Gastrocnemius medialis (tissue), 4 donors: ENCODE measurements at regions of chr19 and their contacts with region 1.

Region 1: DNA sequence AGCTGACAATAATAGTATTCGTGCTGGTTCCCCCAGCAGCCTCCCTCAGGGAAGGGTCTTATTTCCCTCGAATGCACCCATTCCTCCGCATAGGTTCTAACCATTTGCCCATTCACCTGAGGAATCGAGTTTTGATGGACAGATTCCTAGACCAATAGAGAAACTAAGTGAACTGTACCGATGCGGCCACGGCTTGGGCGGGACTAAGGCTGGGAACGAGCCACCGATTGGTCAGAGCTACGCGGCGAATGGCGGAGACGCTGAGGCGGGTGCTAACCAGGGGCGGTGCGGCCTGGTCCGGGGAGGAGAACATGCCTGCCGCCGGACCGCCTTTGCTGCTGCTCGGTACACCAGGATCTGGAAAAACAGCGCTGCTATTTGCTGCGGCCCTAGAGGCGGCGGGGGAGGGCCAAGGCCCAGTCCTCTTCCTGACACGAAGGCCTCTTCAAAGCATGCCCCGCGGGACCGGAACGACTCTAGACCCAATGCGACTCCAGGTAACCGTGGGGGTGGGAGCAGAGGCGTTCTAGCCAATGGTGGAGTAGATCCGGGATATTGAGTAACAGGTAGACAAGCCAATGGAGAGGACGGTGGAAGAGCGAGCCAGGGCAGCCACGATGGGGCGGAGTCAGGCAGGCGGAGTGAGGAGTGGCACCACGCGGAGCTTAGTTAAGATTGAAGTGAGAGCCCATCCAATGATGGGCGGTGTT is at the start of gene SWSAP1:
- DNase-seq: peak; percentile 99
- ATAC-seq: peak; percentile 97 to 98
- H3K4me3 ChIP-seq: peak within 1 kb of the TSS; percentile 73 to 84 (median 76)
- H3K27ac ChIP-seq: peak within 1 kb of the TSS; percentile 93 to 97 (median 94)
- H3K4me1 ChIP-seq: peaks cover 22 to 24% of the 10 kb centered on the region in 2 donors
- H3K27me3 ChIP-seq: no peaks in the 10 kb centered on the region
- CTCF ChIP-seq: no peak
- POLR2A ChIP-seq: peak in 1 of 2 donors; percentile 47
- total RNA-seq, gene SWSAP1: 0.51 to 1.7 (median 1.2) TPM

Region 2: DNA sequence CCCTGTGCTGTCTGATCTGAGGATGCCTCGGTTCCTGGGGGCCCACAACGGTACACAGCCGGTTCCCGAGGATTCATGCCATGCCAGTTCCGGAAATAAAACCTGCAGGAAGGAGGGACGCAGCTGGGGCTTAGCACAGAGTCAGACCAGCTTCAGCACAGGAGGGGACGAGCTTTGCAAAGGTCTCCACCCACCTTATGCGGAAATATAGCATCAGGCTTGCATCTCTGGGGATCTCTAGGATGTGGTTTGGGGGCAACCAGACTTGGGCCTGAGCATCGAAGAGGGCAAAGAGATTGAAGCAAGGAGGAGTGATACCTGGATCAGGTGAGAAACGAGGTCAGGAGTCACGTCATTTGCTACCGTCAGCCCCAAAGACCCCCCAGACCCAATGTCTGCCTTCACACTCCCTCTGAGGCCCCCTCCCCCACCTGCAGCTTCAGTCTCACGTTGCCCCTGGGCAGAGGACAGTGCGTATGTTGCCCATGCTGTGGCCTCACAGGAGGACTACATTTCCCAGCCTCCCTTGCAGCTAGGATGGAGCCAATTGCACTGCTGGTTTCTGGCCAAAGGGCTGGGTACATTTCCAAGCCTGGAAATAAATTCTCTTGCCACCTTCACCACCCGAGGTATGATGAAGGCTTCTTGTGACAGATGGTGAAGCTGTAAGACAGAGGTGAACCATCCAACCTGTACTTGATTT is 1006.3 kb before region 1 on chr19:
- in situ Hi-C with region 1: no loop called
- intact Hi-C with region 1: no loop called
- DNase-seq: no peak
- ATAC-seq: no peak
- H3K4me3 ChIP-seq: no peak overlapping the region
- H3K27ac ChIP-seq: no peak overlapping the region
- H3K4me1 ChIP-seq: no peaks in the 10 kb centered on the region
- H3K27me3 ChIP-seq: no peaks in the 10 kb centered on the region
- CTCF ChIP-seq: no peak
- POLR2A ChIP-seq: no peak

Region 3: GRCh38 chr19:10388957-10389356 is 985.6 kb before region 1 on chr19:
- in situ Hi-C with region 1: no loop called
- intact Hi-C with region 1: loop called (anchors 10 kb)
- DNase-seq: peak; percentile 64 to 77
- ATAC-seq: peak; percentile 72 to 73
- H3K4me3 ChIP-seq: no peak overlapping the region
- H3K27ac ChIP-seq: no peak overlapping the region
- H3K4me1 ChIP-seq: peaks cover 0 to 7% of the 10 kb centered on the region in 2 donors
- H3K27me3 ChIP-seq: no peaks in the 10 kb centered on the region
- CTCF ChIP-seq: peak; percentile 87 to 96 (median 92)
- POLR2A ChIP-seq: no peak

Region 4: DNA sequence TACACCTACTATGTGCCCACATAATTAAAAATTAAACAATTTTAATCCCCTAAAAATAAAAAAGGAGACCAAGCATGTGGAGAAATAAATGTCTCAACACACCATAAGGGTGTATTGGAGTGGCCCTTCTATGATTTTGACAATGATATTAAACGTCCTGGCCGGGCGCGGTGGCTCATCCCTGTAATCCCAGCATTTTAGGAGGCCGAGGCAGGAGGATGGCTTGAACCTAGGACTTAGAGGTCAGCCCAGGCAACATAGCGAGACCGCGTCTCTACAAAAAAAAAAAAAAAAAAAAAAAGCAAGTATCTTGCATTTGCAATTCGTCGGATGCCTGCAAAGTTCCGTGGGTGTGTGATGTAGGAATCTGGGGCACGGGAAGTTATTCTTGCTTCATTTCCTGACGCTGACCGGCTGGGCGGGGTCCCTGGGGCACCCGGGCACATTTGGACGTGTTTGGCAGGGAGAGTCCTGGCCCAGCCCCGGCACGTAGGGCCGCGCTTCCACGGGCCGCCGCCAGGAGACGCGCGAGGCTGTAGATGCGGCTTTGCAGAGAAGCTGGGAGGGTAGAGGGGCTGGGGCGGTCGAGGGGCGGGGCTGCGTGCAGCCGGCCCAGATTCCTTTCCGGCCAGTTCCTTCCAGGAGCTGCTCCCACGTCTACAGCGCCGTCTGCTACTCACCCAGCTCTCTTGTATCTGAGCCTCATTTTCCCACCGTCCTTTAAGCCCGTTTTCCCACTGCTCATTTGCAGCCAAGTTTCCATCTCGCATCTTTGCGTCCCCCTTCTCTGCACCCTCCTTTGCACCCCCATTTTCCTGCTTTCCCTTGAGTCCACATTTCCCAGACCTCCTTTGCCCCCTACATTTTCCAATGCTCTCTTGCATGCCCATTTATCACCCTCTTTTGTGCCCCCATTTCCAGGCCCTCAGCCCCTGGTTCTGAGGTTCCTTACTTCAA is 80.9 kb before region 1 on chr19:
- in situ Hi-C with region 1: no loop called
- intact Hi-C with region 1: loop called (anchors 10 kb)
- DNase-seq: peak; percentile 78 to 86
- ATAC-seq: peak; percentile 83 to 90
- H3K4me3 ChIP-seq: peak overlapping the region in 2 of 4 donors; percentile 9 to 24
- H3K27ac ChIP-seq: peak overlapping the region in 3 of 4 donors; percentile 38 to 67 (median 59)
- H3K4me1 ChIP-seq: no peaks in the 10 kb centered on the region
- H3K27me3 ChIP-seq: peaks cover 0 to 5% (median 0%) of the 10 kb centered on the region in 3 donors
- CTCF ChIP-seq: peak; percentile 80 to 93 (median 90)
- POLR2A ChIP-seq: no peak

Region 5: GRCh38 chr19:11346092-11346940 is 28.3 kb before region 1 on chr19 and contains the starts of genes CCDC159 and TMEM205:
- in situ Hi-C with region 1: no loop called
- intact Hi-C with region 1: loop called (anchors 1 kb)
- DNase-seq: peak; percentile 99
- ATAC-seq: peak; percentile 95
- H3K4me3 ChIP-seq: peak within 1 kb of the TSS; percentile 78 to 92 (median 84)
- H3K27ac ChIP-seq: peak within 1 kb of the TSS; percentile 91 to 93 (median 93)
- H3K4me1 ChIP-seq: peaks cover 21 to 22% of the 10 kb centered on the region in 2 donors
- H3K27me3 ChIP-seq: no peaks in the 10 kb centered on the region
- CTCF ChIP-seq: peak in 1 of 5 experiments; percentile 11
- POLR2A ChIP-seq: peak; percentile 75 to 91
- total RNA-seq, gene CCDC159: 0.85 to 9.2 (median 2.0) TPM
- total RNA-seq, gene TMEM205: 159 to 284 (median 164) TPM

Region 6: DNA sequence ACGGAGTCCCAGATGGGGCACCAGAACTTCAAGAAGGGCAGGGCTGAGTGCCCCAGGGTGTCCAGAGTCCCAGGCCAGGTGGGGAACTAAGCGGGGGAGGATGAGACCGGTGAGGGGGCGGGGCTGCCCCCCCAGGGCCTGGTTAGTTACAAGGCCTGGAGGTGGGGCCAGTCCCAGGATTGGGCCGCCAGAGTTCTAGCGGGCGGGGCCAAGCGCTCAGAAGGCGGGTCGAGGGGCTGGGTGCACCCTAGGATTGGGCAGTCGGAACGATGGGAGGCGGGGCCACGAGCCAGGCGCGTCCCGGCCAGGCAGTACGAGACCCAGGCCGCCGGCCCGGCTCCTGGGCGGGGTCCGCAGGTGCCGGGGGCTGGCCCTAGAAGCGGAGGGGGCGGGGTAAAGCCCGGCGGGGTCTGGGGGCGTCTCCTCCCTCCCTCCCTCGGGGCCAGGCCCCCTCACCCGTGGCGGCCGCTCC is 130.5 kb after region 1 on chr19:
- in situ Hi-C with region 1: no loop called
- intact Hi-C with region 1: loop called (anchors 10 kb)
- DNase-seq: peak; percentile 95 to 97
- ATAC-seq: peak; percentile 91 to 92
- H3K4me3 ChIP-seq: peak overlapping the region; percentile 70 to 99 (median 88)
- H3K27ac ChIP-seq: peak overlapping the region; percentile 83 to 99 (median 97)
- H3K4me1 ChIP-seq: peaks cover 8 to 12% of the 10 kb centered on the region in 2 donors
- H3K27me3 ChIP-seq: no peaks in the 10 kb centered on the region
- CTCF ChIP-seq: no peak
- POLR2A ChIP-seq: no peak